PC-9 (cell line): ENCODE measurements at regions of chr12 and their contacts with region 1.

Region 1: DNA sequence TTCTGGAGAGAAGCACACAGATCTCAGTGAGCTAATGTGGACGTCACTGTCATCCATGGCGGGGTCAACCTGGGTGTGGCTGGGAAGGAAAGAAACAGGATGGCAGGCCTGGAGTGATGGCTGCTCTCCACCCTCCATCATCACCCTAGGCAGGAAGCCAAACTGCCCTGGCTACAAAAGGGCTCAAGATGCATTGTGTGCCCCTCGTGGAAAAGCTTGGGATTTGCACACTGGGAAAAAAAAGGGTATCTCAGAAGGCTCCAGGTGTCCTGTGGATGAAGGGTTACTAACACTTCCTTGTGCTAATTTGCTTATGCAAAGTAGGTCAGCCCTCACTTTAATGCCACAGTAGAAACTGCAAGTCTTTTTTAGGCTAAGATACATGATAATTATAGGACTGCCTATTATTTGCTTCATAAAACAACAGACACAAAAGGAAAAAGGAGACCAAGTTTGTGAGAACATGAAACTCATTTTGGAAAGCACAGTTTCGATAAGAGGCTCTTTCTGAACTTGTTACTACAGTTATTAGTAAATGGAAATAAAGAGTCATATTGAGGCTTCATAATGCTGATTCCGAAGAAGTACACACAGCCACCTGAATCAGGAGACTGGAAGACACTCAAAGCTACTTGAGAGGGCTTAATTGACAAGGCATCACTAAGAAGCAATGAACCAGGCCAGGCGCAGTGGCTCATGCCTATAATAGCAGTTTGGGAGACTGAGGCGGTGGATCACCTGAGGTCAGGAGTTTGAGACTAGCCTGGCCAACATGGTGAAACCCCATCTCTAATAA is 18.9 kb downstream of the RFC5 start:
- DNase-seq: no peak
- H3K4me3 ChIP-seq: no peak overlapping the region
- H3K27ac ChIP-seq: no peak overlapping the region
- H3K4me1 ChIP-seq: no peaks in the 10 kb centered on the region
- H3K27me3 ChIP-seq: no peaks in the 10 kb centered on the region
- CTCF ChIP-seq: no peak

Region 2: DNA sequence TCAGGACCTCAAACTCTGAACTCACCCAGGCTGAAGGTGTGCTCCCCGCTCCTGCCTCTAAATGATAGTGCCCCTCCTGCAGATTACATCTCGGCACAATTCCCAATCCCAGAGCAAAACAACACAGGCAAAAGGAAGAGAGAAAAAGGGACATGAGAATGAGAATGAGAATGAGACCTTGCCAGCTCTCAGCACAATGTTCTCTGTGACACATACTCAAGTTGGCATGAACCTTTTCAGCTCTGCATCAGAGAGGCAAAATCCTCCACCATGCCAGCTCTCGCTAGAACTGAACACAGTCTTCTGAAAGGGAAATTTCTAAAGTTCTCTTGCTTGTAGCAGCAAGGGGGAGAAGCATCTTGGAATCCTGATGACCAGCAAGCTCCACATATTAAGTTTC is 151.3 kb before region 1 on chr12:
- CTCF ChIA-PET with region 1: no interaction called
- POLR2A ChIA-PET with region 1: interaction called, 16 read pairs
- intact Hi-C with region 1: no loop called
- DNase-seq: no peak
- H3K4me3 ChIP-seq: no peak overlapping the region
- H3K27ac ChIP-seq: no peak overlapping the region
- H3K4me1 ChIP-seq: no peaks in the 10 kb centered on the region
- H3K27me3 ChIP-seq: no peaks in the 10 kb centered on the region
- CTCF ChIP-seq: no peak